ENCODE measurements at regions of chr11 and their contacts with region 1.

Region 1: DNA sequence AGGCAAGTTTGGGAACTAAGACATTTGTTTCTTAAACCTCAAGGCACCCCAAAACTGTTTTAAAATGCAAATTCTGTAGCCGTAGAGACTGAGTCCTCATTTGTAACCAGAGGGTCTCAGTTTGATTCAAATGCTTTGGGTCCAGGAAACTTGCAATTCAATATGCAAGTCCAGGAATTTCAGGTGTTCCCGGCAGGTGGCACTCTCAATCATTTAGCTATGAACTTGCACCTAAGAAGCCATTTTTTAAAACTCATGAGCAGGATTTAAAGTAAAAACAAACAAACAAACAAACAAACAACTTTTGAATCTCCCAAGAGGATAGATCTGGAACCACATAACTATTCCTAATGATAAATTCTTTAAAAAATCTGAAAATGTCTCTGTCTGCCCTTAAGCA is 8.7 kb upstream of the ABTB2 start:
- DNase-seq: peak in 1 of 2 experiments; percentile 31
- H3K4me3 ChIP-seq: no peak overlapping the region
- H3K27ac ChIP-seq: no peak overlapping the region
- H3K4me1 ChIP-seq: peaks cover 15% of the 10 kb centered on the region
- H3K27me3 ChIP-seq: no peaks in the 10 kb centered on the region
- CTCF ChIP-seq: peak; percentile 71

Region 2: GRCh38 chr11:33835143-33835878 is 531.2 kb before region 1 on chr11:
- CTCF ChIA-PET with region 1: interaction called, 18 read pairs
- POLR2A ChIA-PET with region 1: no interaction called
- intact Hi-C with region 1: no loop called
- DNase-seq: peak; percentile 18 to 69
- H3K4me3 ChIP-seq: no peak overlapping the region
- H3K27ac ChIP-seq: no peak overlapping the region
- H3K4me1 ChIP-seq: peaks cover 32% of the 10 kb centered on the region
- H3K27me3 ChIP-seq: no peaks in the 10 kb centered on the region
- CTCF ChIP-seq: peak; percentile 79

Region 3: GRCh38 chr11:34331329-34331728 is 35.2 kb before region 1 on chr11:
- CTCF ChIA-PET with region 1: no interaction called
- POLR2A ChIA-PET with region 1: no interaction called
- intact Hi-C with region 1: no loop called
- DNase-seq: peak in 1 of 2 experiments; percentile 76
- H3K4me3 ChIP-seq: peak overlapping the region; percentile 42; the same call in 1 of the 2 replicates
- H3K27ac ChIP-seq: peak overlapping the region; percentile 80
- H3K4me1 ChIP-seq: peaks cover 75% of the 10 kb centered on the region
- H3K27me3 ChIP-seq: no peaks in the 10 kb centered on the region
- CTCF ChIP-seq: no peak

Region 4: GRCh38 chr11:34356130-34356529 is 10.4 kb before region 1 on chr11:
- CTCF ChIA-PET with region 1: no interaction called
- POLR2A ChIA-PET with region 1: no interaction called
- intact Hi-C with region 1: no loop called
- DNase-seq: no peak
- H3K4me3 ChIP-seq: peak overlapping the region; percentile 92
- H3K27ac ChIP-seq: no peak overlapping the region
- H3K4me1 ChIP-seq: peaks cover 57% of the 10 kb centered on the region
- H3K27me3 ChIP-seq: no peaks in the 10 kb centered on the region
- CTCF ChIP-seq: no peak

Region 5: DNA sequence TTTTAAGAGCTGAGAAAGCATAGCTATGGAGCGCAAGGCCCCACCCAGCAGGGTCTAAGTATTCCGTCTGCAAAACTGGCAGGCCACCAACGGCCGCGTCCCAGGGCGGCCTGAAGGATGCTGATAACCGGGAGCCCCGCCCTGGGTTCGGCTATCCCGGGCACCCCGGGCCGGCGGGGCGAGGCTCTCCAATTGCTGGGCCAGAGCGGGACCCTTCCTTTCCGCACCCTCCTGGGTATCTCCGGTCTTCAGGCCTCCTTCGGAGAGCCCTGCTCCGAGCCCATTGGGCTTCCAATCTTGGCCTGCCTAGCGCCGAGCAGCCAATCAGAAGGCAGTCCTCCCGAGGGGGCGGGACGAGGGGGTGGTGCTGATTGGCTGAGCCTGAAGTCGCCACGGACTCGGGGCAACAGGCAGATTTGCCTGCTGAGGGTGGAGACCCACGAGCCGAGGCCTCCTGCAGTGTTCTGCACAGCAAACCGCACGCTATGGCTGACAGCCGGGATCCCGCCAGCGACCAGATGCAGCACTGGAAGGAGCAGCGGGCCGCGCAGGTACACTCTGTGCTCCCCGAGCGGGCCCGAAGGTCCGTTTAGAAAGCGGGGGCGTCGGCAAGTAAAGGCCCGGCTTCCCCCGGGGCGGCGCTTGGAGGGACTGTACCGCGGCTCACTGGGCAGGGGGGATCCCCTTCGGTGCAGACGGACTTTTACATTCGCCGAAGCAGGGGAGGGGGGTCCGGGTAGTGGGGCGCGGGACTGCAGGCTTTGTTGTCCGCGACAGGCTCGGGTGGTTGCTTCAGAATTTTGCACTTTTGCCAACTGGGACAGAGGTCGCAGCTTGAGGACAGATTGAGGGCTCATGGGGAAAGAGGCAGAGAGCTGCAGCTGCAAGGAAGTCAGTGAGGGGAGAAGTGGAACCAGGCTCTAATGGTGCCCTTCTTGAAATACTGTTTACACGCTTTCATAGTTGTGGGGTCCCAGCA is 72.3 kb after region 1 on chr11 and contains the start of gene CAT:
- CTCF ChIA-PET with region 1: interaction called, 4 read pairs
- POLR2A ChIA-PET with region 1: interaction called, 3 read pairs
- intact Hi-C with region 1: loop called (anchors 2 kb)
- DNase-seq: peak; percentile 96 to 99
- H3K4me3 ChIP-seq: peak within 1 kb of the TSS; percentile 90
- H3K27ac ChIP-seq: peak within 1 kb of the TSS; percentile 54
- H3K4me1 ChIP-seq: peaks cover 20% of the 10 kb centered on the region
- H3K27me3 ChIP-seq: no peaks in the 10 kb centered on the region
- CTCF ChIP-seq: no peak
- total RNA-seq, gene CAT: 54.4 and 63.4 TPM in 2 replicates

Region 6: DNA sequence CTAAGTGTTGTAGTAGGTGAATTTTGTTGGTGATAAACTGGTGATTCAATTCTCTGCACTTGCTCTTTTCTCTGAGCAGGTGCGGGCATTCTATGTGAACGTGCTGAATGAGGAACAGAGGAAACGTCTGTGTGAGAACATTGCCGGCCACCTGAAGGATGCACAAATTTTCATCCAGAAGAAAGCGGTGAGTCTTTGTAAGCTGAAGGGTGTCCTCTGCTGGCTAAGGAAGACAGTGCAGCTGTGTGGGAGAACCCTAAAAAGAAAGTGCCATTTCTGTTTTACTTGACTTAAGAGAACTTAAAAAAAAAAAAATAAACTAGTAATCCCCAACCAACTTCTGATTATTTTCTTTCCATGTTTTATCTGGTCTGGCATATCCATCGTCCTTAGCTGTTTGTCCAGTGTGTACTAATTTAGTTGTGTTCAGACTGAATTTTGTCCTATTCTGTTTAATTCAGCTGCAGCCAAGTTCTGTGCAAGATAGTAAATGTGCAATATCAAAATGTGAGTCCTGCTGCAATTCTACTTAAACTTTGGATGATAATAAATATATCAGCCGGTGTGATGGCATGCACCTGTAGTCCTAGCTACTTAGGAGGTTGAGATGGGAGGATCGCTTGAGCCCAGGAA is 101.8 kb after region 1 on chr11:
- CTCF ChIA-PET with region 1: interaction called, 23 read pairs
- POLR2A ChIA-PET with region 1: no interaction called
- intact Hi-C with region 1: loop called (anchors 1 kb)
- DNase-seq: peak; percentile 46 to 55
- H3K4me3 ChIP-seq: no peak overlapping the region
- H3K27ac ChIP-seq: no peak overlapping the region
- H3K4me1 ChIP-seq: no peaks in the 10 kb centered on the region
- H3K27me3 ChIP-seq: no peaks in the 10 kb centered on the region
- CTCF ChIP-seq: peak; percentile 91

Region 7: GRCh38 chr11:34492806-34493414 is 126.4 kb after region 1 on chr11:
- CTCF ChIA-PET with region 1: interaction called, 10 read pairs
- POLR2A ChIA-PET with region 1: no interaction called
- intact Hi-C with region 1: loop called (anchors 1 kb)
- DNase-seq: peak; percentile 41 to 62
- H3K4me3 ChIP-seq: no peak overlapping the region
- H3K27ac ChIP-seq: no peak overlapping the region
- H3K4me1 ChIP-seq: peaks cover 8% of the 10 kb centered on the region
- H3K27me3 ChIP-seq: no peaks in the 10 kb centered on the region
- CTCF ChIP-seq: peak; percentile 91

Region 8: GRCh38 chr11:34502949-34503348 is 136.4 kb after region 1 on chr11:
- CTCF ChIA-PET with region 1: no interaction called
- POLR2A ChIA-PET with region 1: no interaction called
- intact Hi-C with region 1: no loop called
- DNase-seq: no peak
- H3K4me3 ChIP-seq: no peak overlapping the region
- H3K27ac ChIP-seq: peak overlapping the region; percentile 93
- H3K4me1 ChIP-seq: peaks cover 49% of the 10 kb centered on the region
- H3K27me3 ChIP-seq: no peaks in the 10 kb centered on the region
- CTCF ChIP-seq: no peak

Region 9: GRCh38 chr11:34916015-34916842 is 549.7 kb after region 1 on chr11 and contains the starts of genes APIP and PDHX:
- CTCF ChIA-PET with region 1: interaction called, 10 read pairs
- POLR2A ChIA-PET with region 1: no interaction called
- intact Hi-C with region 1: no loop called
- DNase-seq: peak; percentile 98 to 99
- H3K4me3 ChIP-seq: peak within 1 kb of the TSS; percentile 74
- H3K27ac ChIP-seq: peak within 1 kb of the TSS; percentile 83
- H3K4me1 ChIP-seq: peaks cover 26% of the 10 kb centered on the region
- H3K27me3 ChIP-seq: no peaks in the 10 kb centered on the region
- CTCF ChIP-seq: no peak
- total RNA-seq, gene APIP: 34.1 and 41.0 TPM in 2 replicates
- total RNA-seq, gene PDHX: 44.7 and 47.0 TPM in 2 replicates

Measured in PC-9 (cell line).